Spleen (tissue), 13 donors: ENCODE measurements at regions of chr1 and their contacts with region 1.

Region 1: GRCh38 chr1:61453111-61453961 is 271.6 kb downstream of the TM2D1 start:
- DNase-seq: peak; percentile 85
- H3K4me3 ChIP-seq: no peak overlapping the region
- H3K27ac ChIP-seq: peak overlapping the region in 5 of 8 donors; percentile 31 to 61 (median 39)
- H3K4me1 ChIP-seq: peaks cover 6 to 51% (median 23%) of the 10 kb centered on the region in 6 donors
- H3K27me3 ChIP-seq: no peaks in the 10 kb centered on the region
- CTCF ChIP-seq: peak; percentile 29 to 84 (median 71)
- POLR2A ChIP-seq: no peak

Region 2: DNA sequence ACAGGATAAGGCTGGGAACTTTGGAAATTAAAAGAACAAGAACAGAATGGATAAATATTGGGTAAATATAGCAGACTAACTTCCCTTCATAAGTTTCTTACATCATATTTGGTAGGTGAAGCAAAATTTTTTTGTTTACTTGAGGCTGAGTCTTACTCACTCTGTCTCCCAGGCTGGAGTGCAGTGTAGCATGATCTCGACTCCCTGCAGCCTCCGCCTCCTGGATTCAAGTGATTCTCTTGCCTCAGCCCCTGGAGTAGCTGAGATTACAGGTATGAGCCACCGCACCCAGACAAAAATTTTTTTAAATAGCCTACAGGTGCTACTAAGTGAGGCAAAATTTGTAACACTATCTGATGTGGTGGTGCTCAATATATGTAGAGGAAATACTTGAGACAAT is 220.9 kb after region 1 on chr1:
- intact Hi-C with region 1: no loop called
- DNase-seq: no peak
- H3K4me3 ChIP-seq: no peak overlapping the region
- H3K27ac ChIP-seq: no peak overlapping the region
- H3K4me1 ChIP-seq: peaks cover 0 to 6% (median 0%) of the 10 kb centered on the region in 6 donors
- H3K27me3 ChIP-seq: no peaks in the 10 kb centered on the region
- CTCF ChIP-seq: no peak
- POLR2A ChIP-seq: no peak

Region 3: DNA sequence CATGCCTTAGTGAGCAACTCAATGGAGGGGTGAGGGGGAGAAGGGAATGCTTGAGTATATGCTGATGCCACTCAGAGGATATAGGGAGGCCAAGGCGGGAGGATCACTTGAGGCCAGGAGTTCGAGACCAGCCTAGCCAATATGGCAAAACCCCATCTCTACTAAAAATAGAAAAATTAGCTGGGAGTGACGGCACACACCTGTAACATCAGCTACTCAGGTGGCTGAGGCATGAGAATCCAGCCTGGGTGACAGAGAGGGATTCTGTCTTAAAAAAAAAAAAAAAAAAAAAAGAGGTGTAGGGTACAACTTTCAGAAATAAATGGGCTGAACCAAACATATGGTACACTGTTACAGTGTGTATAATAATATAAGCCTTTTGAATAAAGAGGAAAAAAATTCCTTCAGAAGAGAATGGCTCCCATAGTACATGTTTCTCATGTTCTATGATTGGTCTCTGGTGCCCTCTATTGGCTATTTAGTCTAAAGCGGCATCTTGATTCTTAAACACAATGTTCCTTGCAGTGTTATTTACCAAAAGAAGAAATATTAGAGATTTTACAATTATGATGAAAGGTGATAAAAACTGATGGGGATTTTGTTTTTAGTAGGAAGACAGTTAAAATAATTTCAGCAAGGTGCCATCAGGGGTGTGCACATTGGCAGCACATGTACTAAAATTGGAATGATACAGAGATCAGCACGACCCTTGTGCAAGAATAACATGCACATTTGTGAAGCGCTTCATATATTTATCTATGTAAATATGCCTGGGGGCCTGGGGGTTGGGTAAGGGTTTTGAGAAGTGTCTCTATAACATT is 398.7 kb after region 1 on chr1:
- intact Hi-C with region 1: loop called (anchors 10 kb)
- DNase-seq: no peak
- H3K4me3 ChIP-seq: no peak overlapping the region
- H3K27ac ChIP-seq: no peak overlapping the region
- H3K4me1 ChIP-seq: no peaks in the 10 kb centered on the region
- H3K27me3 ChIP-seq: no peaks in the 10 kb centered on the region
- CTCF ChIP-seq: peak in 9 of 11 experiments; percentile 20 to 78 (median 64)
- POLR2A ChIP-seq: no peak